AG04450 (cell line): ENCODE measurements at regions of chr14 and their contacts with region 1.

Region 1: GRCh38 chr14:24080888-24081738 is 9.8 kb downstream of the CPNE6 start:
- DNase-seq: no peak
- H3K4me3 ChIP-seq: peak overlapping the region; percentile 58
- H3K27ac ChIP-seq: no peak overlapping the region
- H3K27me3 ChIP-seq: peaks cover 68% of the 10 kb centered on the region
- CTCF ChIP-seq: no peak

Region 2: GRCh38 chr14:24058260-24058950 is 22.7 kb before region 1 on chr14:
- CTCF ChIA-PET with region 1: interaction called, 24 read pairs
- POLR2A ChIA-PET with region 1: interaction called, 6 read pairs
- DNase-seq: peak; percentile 59
- H3K4me3 ChIP-seq: no peak overlapping the region
- H3K27ac ChIP-seq: no peak overlapping the region
- H3K27me3 ChIP-seq: peaks cover 36% of the 10 kb centered on the region
- CTCF ChIP-seq: peak; percentile 93

Region 3: DNA sequence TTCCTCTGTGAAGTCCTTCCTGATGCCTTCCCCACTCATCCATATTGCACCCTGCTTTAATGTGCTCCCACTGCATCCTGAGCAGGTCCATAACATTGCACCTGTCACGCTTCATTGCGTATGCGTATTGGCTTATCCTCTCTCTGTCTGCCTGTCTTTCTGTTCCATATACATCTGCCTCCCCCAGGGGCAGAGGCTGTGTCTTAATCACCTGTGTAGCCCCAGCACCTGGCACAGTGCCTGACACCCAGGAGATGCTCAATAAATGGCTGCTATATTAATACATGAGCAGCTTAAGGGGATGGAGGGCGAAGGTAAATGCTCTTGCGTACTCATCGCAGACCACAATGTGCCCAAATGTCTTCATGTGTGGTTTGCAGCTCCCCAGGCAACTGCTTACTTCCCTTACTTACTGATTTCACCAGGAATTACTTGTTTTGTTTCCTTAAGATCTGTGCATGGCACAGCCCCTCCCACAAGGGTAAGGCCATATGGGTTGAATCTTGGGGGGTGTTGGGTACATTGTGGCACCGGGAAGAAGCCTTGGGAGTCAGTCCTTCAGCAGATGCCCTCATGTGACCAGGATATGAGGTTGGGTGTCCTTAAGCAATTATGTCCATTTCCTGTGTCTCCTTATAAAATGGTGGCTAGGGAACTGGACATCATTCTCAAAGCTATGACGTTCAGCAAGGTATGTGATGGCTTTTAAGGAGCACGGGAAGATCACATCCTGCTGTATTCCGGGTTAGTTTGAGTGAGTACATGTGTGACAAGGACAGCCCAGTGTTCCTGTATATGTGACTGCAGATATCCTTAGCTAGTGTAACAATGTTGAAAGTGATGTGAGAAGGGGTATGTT is 10.6 kb before region 1 on chr14:
- CTCF ChIA-PET with region 1: no interaction called
- POLR2A ChIA-PET with region 1: no interaction called
- DNase-seq: no peak
- H3K4me3 ChIP-seq: no peak overlapping the region
- H3K27ac ChIP-seq: no peak overlapping the region
- H3K27me3 ChIP-seq: peaks cover 55% of the 10 kb centered on the region
- CTCF ChIP-seq: no peak